ENCODE measurements at regions of chr10 and their contacts with region 1.

Region 1: DNA sequence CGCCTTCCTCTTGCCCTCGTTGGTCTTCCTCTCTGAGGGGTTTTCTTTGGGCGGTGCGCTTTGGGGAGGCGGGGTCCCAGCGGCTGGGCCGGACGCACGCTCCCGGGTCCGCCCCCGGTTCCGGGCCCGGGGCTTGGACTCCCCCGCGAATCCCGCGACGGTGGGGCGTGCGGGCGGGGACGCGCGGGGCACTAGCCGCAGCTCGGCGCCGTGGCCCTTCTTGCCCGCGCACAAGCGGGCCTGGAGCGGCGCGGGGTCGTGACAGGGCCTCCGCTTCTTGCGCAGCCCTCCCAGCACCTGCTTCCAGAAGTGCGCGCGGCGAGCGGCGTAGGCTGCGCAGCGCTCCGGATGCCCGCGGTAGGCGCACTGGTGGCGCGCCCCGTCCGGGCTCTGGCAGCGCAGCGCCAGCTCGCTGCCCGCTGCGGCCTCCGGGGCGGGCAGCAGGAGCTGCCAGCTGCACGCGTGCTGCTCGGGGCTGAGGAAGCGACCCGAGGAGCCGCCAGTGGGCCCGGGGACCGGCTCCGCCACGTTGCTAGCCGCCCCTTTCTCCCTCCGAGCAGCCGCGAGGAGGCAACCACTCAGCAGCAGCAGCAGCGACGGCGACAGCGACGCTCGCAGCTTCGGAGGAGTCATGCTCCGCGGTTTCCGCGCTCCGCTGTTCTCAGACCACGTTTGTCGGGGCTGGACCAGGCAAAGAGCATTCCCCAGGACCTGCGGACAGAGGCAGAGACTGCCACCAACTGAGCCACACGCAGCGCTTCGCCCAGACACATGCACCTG is 759 bp downstream of the FGFBP3 start:
- DNase-seq: peak; percentile 44 to 84 (median 69)
- ATAC-seq: peak; percentile 82 to 86
- H3K4me3 Mint-ChIP-seq: peak overlapping the region; percentile 85 to 97 (median 92)
- H3K27ac Mint-ChIP-seq: peak overlapping the region; percentile 90 to 96 (median 93)
- H3K4me1 Mint-ChIP-seq: peaks cover 8 to 28% (median 21%) of the 10 kb centered on the region in 4 donors
- H3K27me3 Mint-ChIP-seq: peaks cover 0 to 6% (median 0%) of the 10 kb centered on the region in 5 donors

Region 2: GRCh38 chr10:91797874-91798648 is 110.5 kb before region 1 on chr10 and contains the start of gene TNKS2:
- POLR2A ChIA-PET with region 1: interaction called, 38 read pairs
- DNase-seq: peak; percentile 84 to 95 (median 92)
- ATAC-seq: peak; percentile 80
- H3K4me3 Mint-ChIP-seq: peak within 1 kb of the TSS; percentile 93 to 100 (median 98)
- H3K27ac Mint-ChIP-seq: peak within 1 kb of the TSS; percentile 92 to 99 (median 98)
- H3K4me1 Mint-ChIP-seq: peaks cover 31 to 68% (median 62%) of the 10 kb centered on the region in 4 donors
- H3K27me3 Mint-ChIP-seq: no peaks in the 10 kb centered on the region
- polyA plus RNA-seq, gene TNKS2: 15.2 to 25.4 (median 18.6) TPM

Region 3: GRCh38 chr10:91887272-91888076 is 21.1 kb before region 1 on chr10:
- POLR2A ChIA-PET with region 1: interaction called, 13 read pairs
- DNase-seq: peak in 6 of 10 donors; percentile 13 to 28 (median 22)
- ATAC-seq: peak; percentile 76 to 82
- H3K4me3 Mint-ChIP-seq: peak overlapping the region; percentile 87 to 96 (median 93)
- H3K27ac Mint-ChIP-seq: peak overlapping the region in 9 of 10 donors; percentile 36 to 87 (median 75)
- H3K4me1 Mint-ChIP-seq: peaks cover 5 to 12% (median 7%) of the 10 kb centered on the region in 4 donors
- H3K27me3 Mint-ChIP-seq: peaks cover 0 to 11% (median 8%) of the 10 kb centered on the region in 5 donors

Region 4: GRCh38 chr10:91923371-91924211 is 15.1 kb after region 1 on chr10 and contains the start of gene BTAF1:
- POLR2A ChIA-PET with region 1: interaction called, 51 read pairs
- DNase-seq: peak; percentile 85 to 96 (median 90)
- ATAC-seq: peak; percentile 93
- H3K4me3 Mint-ChIP-seq: peak within 1 kb of the TSS; percentile 88 to 100 (median 94)
- H3K27ac Mint-ChIP-seq: peak within 1 kb of the TSS; percentile 95 to 100 (median 98)
- H3K4me1 Mint-ChIP-seq: peaks cover 18 to 48% (median 41%) of the 10 kb centered on the region in 4 donors
- H3K27me3 Mint-ChIP-seq: peaks cover 1 to 10% (median 4%) of the 10 kb centered on the region in 5 donors
- polyA plus RNA-seq, gene BTAF1: 7.9 to 9.1 (median 8.6) TPM